Psoas muscle (tissue), 8 donors: ENCODE measurements at regions of chr12 and their contacts with region 1.

Region 1: GRCh38 chr12:21444193-21445146 is 7.0 kb downstream of the PYROXD1 start:
- DNase-seq: no peak
- ATAC-seq: no peak
- H3K4me3 ChIP-seq: no peak overlapping the region
- H3K27ac ChIP-seq: no peak overlapping the region
- H3K4me1 ChIP-seq: no peaks in the 10 kb centered on the region
- H3K27me3 ChIP-seq: no peaks in the 10 kb centered on the region
- CTCF ChIP-seq: no peak

Region 2: GRCh38 chr12:21657326-21658077 is 213.0 kb after region 1 on chr12 and contains the start of gene LDHB:
- intact Hi-C with region 1: loop called in 1 of 2 experiments (anchors 10 kb)
- DNase-seq: peak; percentile 94
- ATAC-seq: peak; percentile 92 to 98 (median 95)
- H3K4me3 ChIP-seq: peak within 1 kb of the TSS; percentile 84
- H3K27ac ChIP-seq: peak within 1 kb of the TSS; percentile 77
- H3K4me1 ChIP-seq: peaks cover 5% of the 10 kb centered on the region
- H3K27me3 ChIP-seq: peaks cover 0 to 3% (median 0%) of the 10 kb centered on the region in 3 donors
- CTCF ChIP-seq: no peak
- total RNA-seq, gene LDHB: 71.6 to 616 (median 350) TPM